GM12878 (cell line): ENCODE measurements at regions of chr1 and their contacts with region 1.

Region 1: GRCh38 chr1:207429963-207430362 is 24.2 kb upstream of the CR2 start:
- DNase-seq: peak; percentile 70
- ATAC-seq: peak; percentile 58
- H3K4me3 ChIP-seq: no peak overlapping the region
- H3K27ac ChIP-seq: peak overlapping the region; percentile 19
- H3K4me1 ChIP-seq: peaks cover 39% of the 10 kb centered on the region
- H3K27me3 ChIP-seq: no peaks in the 10 kb centered on the region
- CTCF ChIP-seq: no peak
- EP300 ChIP-seq: no peak
- POLR2A ChIP-seq: no peak
- RAD21 ChIP-seq: 0 out of 2 replicates have a peak, but pooled peaks have one; percentile 11

Region 2: GRCh38 chr1:206117151-206117948 is 1312.6 kb before region 1 on chr1 and contains the start of gene AVPR1B:
- CTCF ChIA-PET with region 1: no interaction called
- POLR2A ChIA-PET with region 1: no interaction called
- RAD21 ChIA-PET with region 1: no interaction called
- SMC1A ChIA-PET with region 1: no interaction called
- in situ Hi-C with region 1: no loop called
- intact Hi-C with region 1: no loop called
- DNase-seq: no peak
- ATAC-seq: peak; percentile 50
- H3K4me3 ChIP-seq: no peak within 1 kb of the TSS
- H3K27ac ChIP-seq: no peak within 1 kb of the TSS
- H3K4me1 ChIP-seq: no peaks in the 10 kb centered on the region
- H3K27me3 ChIP-seq: peaks cover 5 to 10% of the 10 kb centered on the region in 2 experiments; a peak in 3 of 4 replicates
- CTCF ChIP-seq: no peak
- EP300 ChIP-seq: no peak
- POLR2A ChIP-seq: no peak
- RAD21 ChIP-seq: no peak
- polyA plus RNA-seq, gene AVPR1B: not detected

Region 3: GRCh38 chr1:207444514-207445217 is 14.7 kb after region 1 on chr1:
- CTCF ChIA-PET with region 1: interaction called, 4 read pairs
- POLR2A ChIA-PET with region 1: interaction called, 5 read pairs
- RAD21 ChIA-PET with region 1: interaction called, 7 read pairs
- SMC1A ChIA-PET with region 1: interaction called, 10 read pairs
- in situ Hi-C with region 1: no loop called
- intact Hi-C with region 1: no loop called
- DNase-seq: no peak
- ATAC-seq: peak; percentile 76
- H3K4me3 ChIP-seq: peak overlapping the region; percentile 16; the same call in 1 of the 2 replicates
- H3K27ac ChIP-seq: no peak overlapping the region
- H3K4me1 ChIP-seq: peaks cover 8% of the 10 kb centered on the region; the same call in 1 of the 2 replicates
- H3K27me3 ChIP-seq: no peaks in the 10 kb centered on the region
- CTCF ChIP-seq: no peak
- EP300 ChIP-seq: no peak
- POLR2A ChIP-seq: no peak
- RAD21 ChIP-seq: no peak